ENCODE measurements at regions of chr7 and their contacts with region 1.

Region 1: DNA sequence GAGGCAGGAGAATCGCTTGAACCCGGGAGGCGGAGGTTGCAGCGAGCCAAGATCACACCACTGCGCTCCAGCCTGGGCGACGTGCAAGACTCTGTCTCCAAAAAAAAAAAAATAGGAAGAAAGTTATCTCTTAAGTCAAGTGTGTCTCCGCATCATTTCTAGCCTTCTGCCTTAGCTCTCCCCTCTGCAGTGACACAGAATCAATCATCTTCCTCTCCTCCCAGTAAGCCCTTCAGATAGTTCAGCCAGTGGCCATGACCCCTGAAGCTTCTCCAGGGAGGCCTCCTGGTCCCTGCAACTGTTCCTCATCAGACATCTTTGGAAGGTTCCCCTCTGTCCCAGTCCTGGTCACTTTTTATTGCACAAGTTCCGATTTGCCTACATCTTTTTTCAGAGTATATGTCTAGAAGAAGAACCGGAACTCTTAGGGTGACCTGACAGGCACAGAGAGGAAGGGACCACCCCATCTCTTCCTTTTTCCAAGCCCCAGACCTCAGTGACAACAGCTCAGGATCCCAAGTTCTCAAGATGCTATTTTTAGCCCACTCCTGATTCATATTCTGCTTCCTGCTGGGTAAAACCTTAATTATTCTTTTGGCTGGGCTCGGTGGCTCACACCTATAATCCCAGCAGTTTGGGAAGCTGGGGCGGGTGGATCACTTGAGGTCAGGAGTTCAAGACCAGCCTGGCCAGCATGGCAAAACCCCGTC is 6.6 kb upstream of the RHBDD2 start:
- DNase-seq: no peak
- ATAC-seq: peak; percentile 76

Region 2: DNA sequence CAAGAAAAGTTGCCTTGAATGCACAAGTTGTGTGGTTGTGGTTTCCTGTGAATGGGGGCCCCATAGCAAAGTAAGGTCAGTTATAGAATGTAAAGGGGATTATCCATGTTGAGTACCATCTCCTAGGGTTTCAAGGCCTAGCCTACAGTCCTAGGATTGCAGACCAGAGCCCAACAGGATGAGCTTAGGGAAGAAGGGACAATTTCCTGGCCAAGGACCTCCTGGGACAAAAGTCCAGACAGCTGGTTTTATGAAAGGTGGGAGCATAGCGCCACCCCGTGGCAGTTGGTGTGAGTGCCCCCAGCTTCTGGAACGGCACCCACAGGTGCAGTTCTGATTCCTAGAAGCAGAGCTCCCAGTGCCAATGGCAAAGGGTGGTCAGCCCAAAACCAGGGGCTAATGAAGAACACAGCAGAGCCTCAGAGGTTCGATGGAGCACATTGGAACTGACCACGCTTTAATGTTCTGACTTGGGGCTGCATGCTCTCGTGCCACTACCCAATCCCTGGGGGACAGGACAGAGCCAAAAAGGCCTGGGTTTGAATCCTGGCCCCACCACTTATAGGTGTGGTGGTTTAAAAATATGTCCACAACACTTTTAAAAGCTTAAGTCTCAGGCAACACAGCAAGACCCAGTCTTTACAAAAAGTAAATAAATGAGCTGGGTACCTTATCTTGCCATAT is 147.9 kb after region 1 on chr7:
- intact Hi-C with region 1: loop called (anchors 5 kb)
- DNase-seq: peak; percentile 88
- ATAC-seq: peak; percentile 86

Region 3: GRCh38 chr7:76077435-76077834 is 205.2 kb after region 1 on chr7:
- intact Hi-C with region 1: no loop called
- DNase-seq: no peak
- ATAC-seq: no peak

Region 4: DNA sequence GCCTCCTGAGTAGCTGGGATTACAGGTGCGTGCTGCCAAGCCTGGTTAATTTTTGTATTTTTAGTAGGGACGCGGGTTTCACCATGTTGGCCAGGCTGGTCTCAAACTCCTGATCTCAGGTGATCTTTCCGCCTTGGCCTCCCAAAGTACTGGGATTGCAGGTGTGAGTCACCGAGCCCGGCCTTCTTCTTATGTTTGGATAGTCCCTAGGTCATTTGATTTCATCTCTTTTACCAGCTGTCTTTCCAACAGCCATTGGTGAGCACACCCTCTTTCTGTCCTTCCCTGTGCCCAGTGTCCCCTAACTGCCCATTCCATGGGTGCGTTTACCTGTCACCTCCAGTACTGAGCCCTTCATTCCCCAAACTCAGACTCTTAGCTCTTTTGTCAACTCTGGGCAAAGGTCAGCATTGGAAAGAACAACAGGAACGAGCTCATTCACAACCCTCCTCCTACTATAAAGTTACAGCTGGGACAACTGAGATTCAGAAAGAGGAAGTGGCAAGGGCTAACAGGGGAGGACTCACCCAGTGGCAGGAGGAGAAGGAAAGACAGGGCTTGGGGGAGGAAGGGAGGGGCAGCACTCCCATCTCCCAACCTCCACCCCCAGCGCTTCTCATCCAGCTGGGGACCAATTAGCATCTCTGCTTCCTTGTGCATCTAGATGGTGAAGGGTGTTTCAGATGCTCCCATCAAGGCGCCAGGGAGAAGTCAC is 531.7 kb after region 1 on chr7:
- intact Hi-C with region 1: no loop called
- DNase-seq: no peak
- ATAC-seq: peak; percentile 66

Measured in left ventricle myocardium superior (tissue), 1 donor.